Heart right ventricle (tissue), 16 donors: ENCODE measurements at regions of chr20 and their contacts with region 1.

Region 1: DNA sequence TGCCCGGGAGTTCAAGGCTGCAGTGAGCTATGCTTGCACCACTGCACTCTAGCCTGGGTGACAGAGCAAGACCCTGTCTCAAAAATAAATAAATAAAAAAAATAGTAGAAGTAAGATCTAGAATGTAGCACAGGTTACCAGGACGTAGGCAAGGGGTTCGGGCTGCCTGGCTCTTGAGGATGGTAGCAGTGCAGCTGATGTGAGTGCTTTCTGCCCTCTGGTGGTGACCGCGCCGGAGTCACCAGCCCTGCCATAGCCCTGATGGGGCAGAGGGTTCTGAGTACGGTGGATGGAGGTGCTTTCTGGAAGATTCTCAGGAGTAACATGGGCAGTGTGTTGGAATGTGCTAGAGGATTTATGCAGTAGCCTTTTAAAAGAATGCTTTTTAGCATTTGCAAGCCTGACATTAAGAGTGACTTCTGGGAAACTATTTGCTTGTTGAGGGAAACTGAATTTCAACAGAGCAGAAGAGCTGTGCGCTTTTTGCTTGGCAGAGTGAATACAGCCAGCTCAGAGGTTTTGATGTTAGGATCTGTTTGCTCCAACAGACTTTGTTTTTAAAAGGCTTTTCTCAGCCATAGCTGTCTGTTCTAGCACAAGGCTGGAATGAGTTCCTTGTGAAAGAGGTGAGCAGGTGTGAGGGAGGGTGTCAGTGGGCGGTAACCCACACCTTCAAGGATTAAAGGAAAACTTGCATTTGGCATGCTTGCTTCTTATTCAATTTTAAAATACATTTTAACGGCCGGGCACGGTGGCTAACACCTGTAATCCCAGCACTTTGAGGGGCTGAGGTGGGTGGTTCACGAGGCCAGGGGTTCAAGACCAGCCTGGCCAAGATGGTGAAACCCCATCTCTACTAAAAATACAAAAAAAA is 65.9 kb downstream of the PTPN1 start:
- DNase-seq: peak; percentile 61 to 71
- ATAC-seq: peak; percentile 52 to 75 (median 66)
- H3K4me3 ChIP-seq: no peak overlapping the region
- H3K27ac ChIP-seq: peak overlapping the region in 7 of 10 donors; percentile 2 to 73 (median 38)
- H3K4me1 ChIP-seq: peaks cover 10 to 66% (median 44%) of the 10 kb centered on the region in 9 donors
- H3K27me3 ChIP-seq: no peaks in the 10 kb centered on the region
- CTCF ChIP-seq: peak; percentile 34 to 81 (median 72)

Region 2: GRCh38 chr20:50267041-50267865 is 308.8 kb before region 1 on chr20:
- intact Hi-C with region 1: no loop called
- DNase-seq: peak in 1 of 2 donors; percentile 45
- ATAC-seq: peak in 7 of 8 donors; percentile 8 to 57 (median 34)
- H3K4me3 ChIP-seq: peak overlapping the region in 1 of 10 donors; percentile 40
- H3K27ac ChIP-seq: peak overlapping the region in 2 of 10 donors; percentile 29 to 96
- H3K4me1 ChIP-seq: peaks cover 0 to 66% (median 8%) of the 10 kb centered on the region in 9 donors
- H3K27me3 ChIP-seq: no peaks in the 10 kb centered on the region
- CTCF ChIP-seq: no peak

Region 3: DNA sequence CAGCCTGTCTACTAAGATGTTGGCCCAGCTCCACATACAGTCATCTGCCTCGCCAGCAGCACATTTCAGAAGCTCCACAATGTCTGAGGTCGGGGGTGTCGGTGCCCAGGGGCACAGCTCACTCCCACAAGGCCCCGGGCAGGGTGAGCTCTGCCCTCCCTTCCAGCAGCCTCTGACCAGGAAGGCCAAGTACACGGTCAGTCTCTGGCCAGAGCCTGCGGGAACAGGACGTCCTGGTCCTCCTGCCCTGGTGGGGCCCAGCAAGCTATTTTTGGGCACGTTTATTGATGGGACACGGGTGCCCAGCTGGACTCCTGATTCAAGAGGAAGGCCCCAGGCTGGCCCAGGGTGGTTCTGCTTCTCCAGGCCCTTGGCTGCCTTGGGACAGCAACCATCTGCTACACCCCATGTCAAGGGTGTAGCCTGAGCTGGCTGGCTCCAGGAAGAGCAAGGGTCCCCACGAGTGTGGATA is 180.8 kb before region 1 on chr20:
- intact Hi-C with region 1: loop called in 1 of 10 experiments (anchors 10 kb)
- DNase-seq: peak; percentile 44 to 79
- ATAC-seq: peak in 7 of 8 donors; percentile 33 to 86 (median 78)
- H3K4me3 ChIP-seq: no peak overlapping the region
- H3K27ac ChIP-seq: peak overlapping the region; percentile 77 to 91 (median 82)
- H3K4me1 ChIP-seq: peaks cover 0 to 60% (median 37%) of the 10 kb centered on the region in 9 donors
- H3K27me3 ChIP-seq: no peaks in the 10 kb centered on the region
- CTCF ChIP-seq: no peak

Region 4: DNA sequence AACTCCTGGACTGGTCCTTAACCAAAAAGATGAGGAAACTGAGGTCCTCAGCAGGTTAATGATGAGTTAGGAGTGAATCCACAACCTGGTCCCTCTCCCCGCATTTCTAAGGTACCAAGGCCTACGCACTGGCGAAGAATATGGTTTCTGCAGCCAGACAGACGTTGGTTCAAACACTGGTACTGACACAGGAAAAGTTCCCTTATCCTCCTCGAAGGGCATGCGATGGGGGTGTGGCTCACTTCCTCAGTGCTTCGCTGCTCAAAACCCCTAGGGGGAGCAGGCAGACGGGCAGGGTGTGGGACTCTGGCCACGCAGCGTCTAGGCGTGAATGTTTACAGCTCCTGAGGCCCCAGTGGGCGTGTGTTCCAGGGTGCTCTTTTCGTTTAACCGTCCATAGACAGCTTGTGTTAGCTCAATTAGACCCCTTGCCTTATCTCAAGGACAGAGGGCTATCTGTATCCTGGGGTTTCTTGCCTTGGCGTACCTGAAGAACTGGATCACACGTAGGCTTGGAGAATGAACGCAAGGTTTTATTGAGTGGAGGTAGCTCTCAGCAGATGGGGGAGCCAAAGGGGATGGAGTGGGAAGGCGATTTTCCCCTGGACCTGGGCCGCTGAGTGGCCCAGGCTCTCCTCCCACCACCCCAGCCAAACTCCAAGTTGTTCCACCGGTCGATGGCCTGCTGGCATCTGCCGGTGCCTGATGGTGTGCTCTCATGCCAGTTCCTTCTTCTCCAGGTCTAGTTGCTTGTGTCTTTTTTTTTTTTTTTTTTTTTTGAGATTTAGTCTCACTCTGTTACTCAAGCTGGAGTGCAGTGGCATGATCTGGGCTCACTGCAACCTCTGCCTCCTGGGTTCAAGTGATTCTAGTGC is 97.7 kb before region 1 on chr20:
- intact Hi-C with region 1: loop called in 4 of 10 experiments (anchors 5 kb)
- DNase-seq: peak; percentile 28 to 44
- ATAC-seq: peak; percentile 44 to 84 (median 66)
- H3K4me3 ChIP-seq: no peak overlapping the region
- H3K27ac ChIP-seq: peak overlapping the region in 1 of 10 donors; percentile 12
- H3K4me1 ChIP-seq: peaks cover 0 to 37% (median 12%) of the 10 kb centered on the region in 9 donors
- H3K27me3 ChIP-seq: no peaks in the 10 kb centered on the region
- CTCF ChIP-seq: peak in 8 of 9 donors; percentile 24 to 68 (median 46)

Region 5: GRCh38 chr20:50504231-50504823 is 71.8 kb before region 1 on chr20:
- intact Hi-C with region 1: loop called in 3 of 10 experiments (anchors 5 to 10 kb)
- DNase-seq: no peak
- ATAC-seq: peak in 5 of 8 donors; percentile 32 to 69 (median 63)
- H3K4me3 ChIP-seq: no peak overlapping the region
- H3K27ac ChIP-seq: peak overlapping the region in 6 of 10 donors; percentile 27 to 89 (median 56)
- H3K4me1 ChIP-seq: peaks cover 0 to 59% (median 13%) of the 10 kb centered on the region in 9 donors
- H3K27me3 ChIP-seq: no peaks in the 10 kb centered on the region
- CTCF ChIP-seq: peak in 6 of 9 donors; percentile 20 to 50 (median 37)

Region 6: DNA sequence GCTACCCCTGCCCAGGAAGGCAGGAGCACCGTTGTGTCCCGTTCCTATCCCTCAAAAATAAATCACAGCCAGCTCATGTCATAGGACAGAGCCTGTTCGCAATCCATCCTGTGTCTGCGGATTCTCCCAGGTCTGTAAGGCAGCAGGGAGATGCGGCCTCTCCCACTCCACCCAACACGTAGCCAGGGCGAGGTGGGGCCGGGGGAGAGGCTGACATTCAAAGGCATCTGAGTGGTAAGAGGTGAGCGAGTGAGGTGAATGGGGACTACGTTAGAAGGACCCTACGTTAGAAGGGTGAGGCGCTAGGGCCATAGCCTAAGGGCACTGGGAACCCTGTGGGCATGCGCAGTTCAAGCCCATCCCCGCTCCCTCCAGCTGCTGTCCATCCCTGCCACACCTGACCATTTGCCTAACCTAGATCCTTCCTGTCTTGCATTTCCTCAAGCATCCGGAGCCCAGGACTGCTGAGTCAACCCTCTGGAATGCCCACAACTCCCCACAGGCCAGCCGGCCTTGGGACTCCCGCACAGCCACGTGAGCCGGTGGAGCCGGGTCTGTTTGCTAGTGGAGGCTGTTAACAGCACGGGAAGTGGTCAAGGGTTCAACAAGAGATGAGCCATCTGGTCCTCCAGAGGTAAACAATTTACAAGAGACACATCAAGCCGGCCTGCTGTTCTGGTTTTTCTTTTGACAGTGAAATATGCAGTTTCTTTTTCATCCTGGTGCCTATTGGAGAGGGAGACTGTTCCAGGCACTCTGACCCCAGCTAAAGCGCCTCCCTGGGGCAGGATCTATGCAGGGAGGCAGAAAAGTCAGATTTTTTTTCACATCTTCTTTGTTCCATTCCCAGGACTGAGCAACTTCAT is 69.4 kb after region 1 on chr20:
- intact Hi-C with region 1: no loop called
- DNase-seq: peak; percentile 75 to 81
- ATAC-seq: peak; percentile 57 to 91 (median 82)
- H3K4me3 ChIP-seq: no peak overlapping the region
- H3K27ac ChIP-seq: peak overlapping the region in 9 of 10 donors; percentile 8 to 77 (median 66)
- H3K4me1 ChIP-seq: peaks cover 0 to 37% (median 21%) of the 10 kb centered on the region in 9 donors
- H3K27me3 ChIP-seq: no peaks in the 10 kb centered on the region
- CTCF ChIP-seq: no peak

Region 7: DNA sequence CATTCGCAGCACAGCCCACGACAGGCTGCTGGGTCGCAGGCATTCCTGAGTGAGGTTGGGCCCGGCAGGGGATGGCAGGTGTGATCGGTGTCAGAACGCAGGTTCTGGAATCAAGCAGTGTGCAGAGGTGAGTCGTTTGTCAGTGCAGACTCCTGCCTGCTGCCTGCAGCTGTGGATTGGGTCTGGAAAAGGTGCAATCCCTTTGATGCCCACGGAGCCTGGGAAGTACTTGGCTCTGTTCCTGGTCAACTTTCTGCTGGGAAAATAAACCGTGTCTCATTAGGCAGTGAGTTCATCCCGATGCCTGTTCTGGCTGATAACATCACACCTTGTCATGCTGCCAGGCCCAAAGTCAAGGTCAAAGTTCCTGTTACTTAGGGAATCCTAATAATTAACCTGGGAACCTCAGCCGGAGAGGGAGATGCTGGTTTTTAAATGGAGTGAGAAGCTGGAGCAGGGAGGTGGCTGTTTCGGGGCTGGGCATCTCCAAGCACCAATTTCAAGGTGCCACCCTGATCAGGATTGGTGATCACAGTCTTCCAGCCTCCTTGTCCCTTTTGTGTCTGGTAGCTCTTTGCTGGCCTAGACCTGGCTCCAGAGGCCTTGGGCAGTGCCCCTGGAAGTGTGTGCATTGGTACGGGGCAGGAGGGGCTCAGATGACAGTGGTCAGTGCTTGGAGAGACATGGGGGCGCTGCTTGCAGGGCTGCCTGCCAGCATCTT is 280.1 kb after region 1 on chr20:
- intact Hi-C with region 1: no loop called
- DNase-seq: no peak
- ATAC-seq: no peak
- H3K4me3 ChIP-seq: no peak overlapping the region
- H3K27ac ChIP-seq: no peak overlapping the region
- H3K4me1 ChIP-seq: no peaks in the 10 kb centered on the region
- H3K27me3 ChIP-seq: peaks cover 0 to 5% (median 0%) of the 10 kb centered on the region in 7 donors
- CTCF ChIP-seq: no peak